AG04450 (cell line): ENCODE measurements at regions of chr3 and their contacts with region 1.

Region 1: DNA sequence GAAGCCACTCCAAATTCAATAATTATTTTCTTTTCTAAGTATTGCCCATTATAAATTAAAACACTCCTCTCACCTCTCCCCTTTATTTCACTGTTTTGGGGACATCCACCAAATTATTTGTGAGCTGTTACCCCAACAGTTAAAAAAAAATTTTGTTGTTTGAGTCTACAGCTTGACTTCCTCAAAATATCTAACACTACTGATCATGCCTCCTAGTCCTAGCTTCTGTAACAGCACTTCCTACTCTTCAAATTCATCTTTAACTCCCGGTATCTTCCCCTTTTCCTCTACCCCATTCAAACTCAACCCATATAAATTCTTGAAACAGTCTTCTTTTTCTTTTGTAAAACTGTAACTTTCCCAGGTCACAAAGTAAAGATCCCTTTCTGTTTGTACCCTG is 15.9 kb downstream of the PARL start:
- DNase-seq: no peak
- H3K4me3 ChIP-seq: no peak overlapping the region
- H3K27ac ChIP-seq: no peak overlapping the region
- H3K27me3 ChIP-seq: no peaks in the 10 kb centered on the region
- CTCF ChIP-seq: no peak

Region 2: DNA sequence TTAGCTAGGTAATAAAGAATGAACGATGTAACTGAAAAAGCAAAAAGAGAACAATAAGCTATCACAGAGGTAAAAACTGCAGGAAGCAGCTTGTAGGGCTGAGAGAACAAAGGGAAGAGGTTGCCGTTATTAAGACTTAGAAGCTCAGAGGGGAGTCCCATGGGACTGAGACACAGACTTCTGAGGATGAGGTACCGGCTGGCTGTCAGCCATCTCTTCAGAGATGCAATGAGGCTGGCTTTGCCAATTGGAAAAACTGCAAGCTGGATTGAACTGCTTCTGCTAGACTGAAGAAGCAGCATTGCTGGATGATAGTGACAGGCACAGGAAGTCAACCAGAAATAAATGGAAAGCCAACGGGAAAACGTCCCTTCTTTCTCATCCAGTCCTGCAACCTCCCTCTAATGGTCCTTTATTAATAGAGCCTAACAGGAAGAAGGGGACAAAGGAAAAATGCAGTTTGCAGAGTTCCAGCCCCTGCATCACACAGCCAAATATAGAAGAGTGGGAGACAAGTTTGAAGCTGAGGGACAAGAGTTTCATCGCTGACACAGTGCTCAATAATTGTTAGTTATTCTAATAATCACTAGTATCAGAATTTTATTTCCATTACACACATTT is 292.2 kb before region 1 on chr3:
- CTCF ChIA-PET with region 1: no interaction called
- POLR2A ChIA-PET with region 1: interaction called, 10 read pairs
- DNase-seq: no peak
- H3K4me3 ChIP-seq: no peak overlapping the region
- H3K27ac ChIP-seq: no peak overlapping the region
- H3K27me3 ChIP-seq: peaks cover 24% of the 10 kb centered on the region
- CTCF ChIP-seq: no peak

Region 3: DNA sequence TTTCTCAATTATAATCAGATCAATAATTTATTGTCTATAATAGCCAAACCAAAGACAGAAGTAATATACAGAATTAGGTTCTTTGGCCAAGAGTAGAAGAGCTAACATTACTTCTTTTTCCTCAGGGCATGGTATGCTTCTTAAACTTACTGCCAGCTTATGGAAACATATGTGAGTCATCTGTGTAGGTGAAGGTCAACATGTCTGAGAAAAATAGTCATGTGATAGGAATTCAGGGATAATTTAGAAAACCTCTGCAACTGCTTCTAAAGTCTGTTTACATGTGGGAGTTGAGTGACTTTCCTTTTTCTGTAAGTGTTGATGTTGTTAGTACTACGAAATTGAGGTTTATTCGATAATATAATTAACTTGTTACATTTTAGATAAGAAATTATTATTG is 24.2 kb before region 1 on chr3:
- CTCF ChIA-PET with region 1: no interaction called
- POLR2A ChIA-PET with region 1: no interaction called
- DNase-seq: peak; percentile 62
- H3K4me3 ChIP-seq: no peak overlapping the region
- H3K27ac ChIP-seq: no peak overlapping the region
- H3K27me3 ChIP-seq: no peaks in the 10 kb centered on the region
- CTCF ChIP-seq: no peak

Region 4: DNA sequence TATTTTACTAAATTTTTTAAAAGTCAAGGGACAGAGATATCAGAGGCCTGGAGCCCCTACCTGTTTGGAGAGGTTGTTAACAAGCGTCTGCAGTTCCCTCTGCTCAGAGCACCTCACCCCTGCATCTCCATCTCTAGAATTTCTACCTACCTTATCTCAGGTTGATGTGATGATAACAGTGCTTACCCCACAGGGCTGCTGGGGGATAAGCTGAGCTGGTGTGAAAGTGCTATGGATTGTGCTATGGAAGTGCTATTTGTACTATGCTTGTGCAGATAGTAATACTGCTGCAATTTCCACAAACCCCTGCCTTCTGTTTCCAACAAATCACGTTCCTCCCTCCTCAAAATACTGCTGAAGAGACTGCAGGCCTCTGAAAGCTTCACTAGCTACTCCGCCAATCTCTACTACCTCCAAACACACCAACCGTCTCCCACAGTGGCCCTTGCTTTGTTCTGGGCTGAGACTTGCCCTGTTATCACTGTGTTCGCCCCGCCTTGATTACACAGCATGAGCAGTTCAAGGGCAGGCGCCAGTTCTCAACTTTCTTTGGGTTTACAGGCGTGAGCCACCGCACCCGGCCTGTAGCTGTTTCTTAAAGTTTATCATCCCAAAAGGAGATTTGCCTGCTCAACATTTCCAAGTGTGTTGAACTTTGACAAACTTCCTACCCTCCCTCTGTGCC is 44.2 kb after region 1 on chr3:
- CTCF ChIA-PET with region 1: no interaction called
- POLR2A ChIA-PET with region 1: no interaction called
- DNase-seq: no peak
- H3K4me3 ChIP-seq: no peak overlapping the region
- H3K27ac ChIP-seq: no peak overlapping the region
- H3K27me3 ChIP-seq: peaks cover 3% of the 10 kb centered on the region
- CTCF ChIP-seq: no peak